ENCODE measurements at regions of chr2 and their contacts with region 1.

Region 1: GRCh38 chr2:1140389-1141003 is 189.8 kb downstream of the SNTG2 start:
- DNase-seq: peak; percentile 55 to 88 (median 78)
- ATAC-seq: peak; percentile 99
- H3K4me3 ChIP-seq: no peak overlapping the region
- H3K27ac ChIP-seq: no peak overlapping the region
- H3K4me1 ChIP-seq: 0 out of 5 replicates have a peak, but pooled peaks cover 0 to 3% of the 10 kb centered on the region in 2 experiments
- H3K27me3 ChIP-seq: peaks cover 0 to 5% of the 10 kb centered on the region in 2 experiments; a peak in 2 of 5 replicates
- CTCF ChIP-seq: peak; percentile 73 to 91 (median 82)
- EP300 ChIP-seq: no peak
- POLR2A ChIP-seq: no peak
- RAD21 ChIP-seq: peak in 1 of 2 experiments; percentile 40; a peak in 2 of 4 replicates

Region 2: DNA sequence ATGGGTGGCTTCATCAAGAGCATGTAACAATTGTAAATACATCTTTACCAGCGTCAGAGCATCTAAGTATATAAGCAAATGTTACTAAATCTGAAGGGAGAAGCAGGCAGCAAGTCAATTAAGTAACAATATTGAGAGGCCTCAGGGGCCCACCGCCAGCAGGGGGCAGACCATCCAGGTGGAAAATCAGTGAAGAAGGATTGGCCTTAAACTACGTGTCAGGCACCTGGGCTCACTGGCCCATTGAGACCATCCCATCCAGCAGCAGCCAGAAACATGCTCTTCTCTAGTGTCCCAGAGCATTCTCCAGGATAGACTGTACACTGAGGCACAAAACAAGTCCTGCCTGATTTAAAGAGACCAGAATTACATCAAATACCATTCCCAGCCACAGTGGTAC is 286.0 kb before region 1 on chr2:
- CTCF ChIA-PET with region 1: no interaction called
- POLR2A ChIA-PET with region 1: no interaction called
- in situ Hi-C with region 1: no loop called
- intact Hi-C with region 1: loop called (anchors 5 kb)
- DNase-seq: peak; percentile 54 to 58 (median 56)
- ATAC-seq: peak; percentile 85
- H3K4me3 ChIP-seq: no peak overlapping the region
- H3K27ac ChIP-seq: no peak overlapping the region
- H3K4me1 ChIP-seq: no peaks in the 10 kb centered on the region
- H3K27me3 ChIP-seq: peaks cover 6 to 14% of the 10 kb centered on the region in 2 experiments; a peak in 4 of 5 replicates
- CTCF ChIP-seq: peak; percentile 56 to 77 (median 61)
- EP300 ChIP-seq: no peak
- POLR2A ChIP-seq: no peak
- RAD21 ChIP-seq: peak in 1 of 2 experiments; percentile 56; a peak in 2 of 4 replicates

Region 3: GRCh38 chr2:950080-950966 is 190.2 kb before region 1 on chr2 and contains the start of gene SNTG2:
- CTCF ChIA-PET with region 1: no interaction called
- POLR2A ChIA-PET with region 1: no interaction called
- in situ Hi-C with region 1: no loop called
- intact Hi-C with region 1: loop called (anchors 5 kb)
- DNase-seq: peak; percentile 32 to 88 (median 86)
- ATAC-seq: peak; percentile 99
- H3K4me3 ChIP-seq: peak within 1 kb of the TSS; percentile 18
- H3K27ac ChIP-seq: no peak within 1 kb of the TSS
- H3K4me1 ChIP-seq: peaks cover 0 to 12% of the 10 kb centered on the region in 2 experiments; a peak in 1 of 5 replicates
- H3K27me3 ChIP-seq: peaks cover 9 to 21% of the 10 kb centered on the region in 2 experiments; a peak in 3 of 5 replicates
- CTCF ChIP-seq: no peak
- EP300 ChIP-seq: no peak
- POLR2A ChIP-seq: no peak
- RAD21 ChIP-seq: no peak
- polyA plus RNA-seq, gene SNTG2: not detected